ENCODE measurements at regions of chr21 and their contacts with region 1.

Region 1: GRCh38 chr21:35316933-35317332 is 267.8 kb upstream of the RUNX1 start:
- DNase-seq: peak; percentile 39
- ATAC-seq: peak; percentile 45 to 87

Region 2: DNA sequence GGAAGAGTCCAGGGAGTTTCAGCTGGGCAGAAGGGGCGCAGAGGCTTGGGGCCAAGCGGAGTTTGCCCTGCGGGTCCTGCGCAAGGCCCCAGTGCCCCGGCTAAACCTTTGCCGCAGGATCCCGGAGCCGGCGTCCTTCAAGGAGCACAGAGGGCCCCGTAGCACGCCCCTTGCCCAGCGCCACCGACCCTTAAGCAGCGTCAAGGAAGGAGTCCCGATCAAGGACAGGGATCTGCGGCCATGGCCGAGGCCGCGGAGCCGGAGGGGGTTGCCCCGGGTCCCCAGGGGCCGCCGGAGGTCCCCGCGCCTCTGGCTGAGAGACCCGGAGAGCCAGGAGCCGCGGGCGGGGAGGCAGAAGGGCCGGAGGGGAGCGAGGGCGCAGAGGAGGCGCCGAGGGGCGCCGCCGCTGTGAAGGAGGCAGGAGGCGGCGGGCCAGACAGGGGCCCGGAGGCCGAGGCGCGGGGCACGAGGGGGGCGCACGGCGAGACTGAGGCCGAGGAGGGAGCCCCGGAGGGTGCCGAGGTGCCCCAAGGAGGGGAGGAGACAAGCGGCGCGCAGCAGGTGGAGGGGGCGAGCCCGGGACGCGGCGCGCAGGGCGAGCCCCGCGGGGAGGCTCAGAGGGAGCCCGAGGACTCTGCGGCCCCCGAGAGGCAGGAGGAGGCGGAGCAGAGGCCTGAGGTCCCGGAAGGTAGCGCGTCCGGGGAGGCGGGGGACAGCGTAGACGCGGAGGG is 647.6 kb before region 1 on chr21:
- intact Hi-C with region 1: no loop called
- DNase-seq: no peak
- ATAC-seq: peak; percentile 62 to 71

Region 3: DNA sequence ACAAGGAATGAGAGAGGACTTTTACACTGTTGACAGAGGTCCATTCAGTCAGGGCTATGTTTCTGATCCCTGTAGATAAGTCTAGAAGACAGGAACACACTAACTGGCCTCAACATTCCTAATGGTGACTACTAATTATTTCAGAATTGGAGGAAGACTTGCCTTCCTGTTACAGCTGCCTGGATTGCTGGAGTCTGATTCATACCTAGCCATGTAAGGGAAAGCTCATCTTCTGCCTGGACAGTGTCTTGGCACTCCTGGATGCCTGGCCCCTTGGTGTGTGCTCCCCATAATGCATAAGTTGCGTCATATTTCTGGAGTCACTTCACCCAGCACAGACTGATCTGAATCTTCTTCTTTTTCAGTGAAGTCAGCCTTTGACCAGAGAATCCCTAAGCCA is 58.2 kb after region 1 on chr21:
- intact Hi-C with region 1: loop called in 1 of 2 experiments (anchors 10 kb)
- DNase-seq: no peak
- ATAC-seq: peak in 1 of 2 donors; percentile 58